HAP-1 (cell line): ENCODE measurements at regions of chr6 and their contacts with region 1.

Region 1: DNA sequence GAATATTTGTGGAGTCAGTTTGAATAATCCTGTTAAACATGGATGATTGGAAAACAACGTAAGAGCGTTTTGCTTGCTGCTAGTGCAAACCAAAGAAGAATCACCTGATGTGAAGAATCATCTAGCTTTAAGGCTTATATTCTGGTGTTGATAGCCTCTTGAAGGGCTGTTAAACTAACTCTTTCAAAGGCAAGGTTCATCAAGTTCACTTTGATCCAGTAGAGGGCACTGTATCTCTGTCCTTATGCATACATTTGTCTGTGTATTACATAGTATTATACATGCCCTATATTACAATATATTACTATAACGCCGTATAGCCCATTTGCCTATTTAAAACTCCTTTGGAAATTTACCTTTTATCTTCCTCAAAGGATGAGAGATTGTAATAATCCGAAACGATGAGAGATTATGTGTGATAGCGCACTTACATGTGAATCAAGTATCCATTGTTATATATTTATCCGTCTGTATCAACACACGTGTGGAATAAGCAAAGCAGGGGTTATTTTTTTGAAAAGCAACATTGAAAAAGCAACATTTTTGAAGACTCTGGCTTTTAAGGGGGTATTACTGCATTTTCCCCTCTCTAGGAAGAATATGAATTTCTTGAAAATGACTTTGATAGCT is 50.8 kb upstream of the NRN1 start:
- DNase-seq: peak; percentile 14 to 47
- H3K4me3 ChIP-seq: no peak overlapping the region
- H3K4me1 ChIP-seq: no peaks in the 10 kb centered on the region
- H3K27me3 ChIP-seq: no peaks in the 10 kb centered on the region

Region 2: GRCh38 chr6:6547110-6547879 is 489.8 kb after region 1 on chr6:
- in situ Hi-C with region 1: loop called (anchors 25 kb)
- DNase-seq: peak; percentile 57 to 86
- H3K4me3 ChIP-seq: no peak overlapping the region
- H3K4me1 ChIP-seq: no peaks in the 10 kb centered on the region
- H3K27me3 ChIP-seq: no peaks in the 10 kb centered on the region